Psoas muscle (tissue), 8 donors: ENCODE measurements at regions of chr1 and their contacts with region 1.

Region 1: DNA sequence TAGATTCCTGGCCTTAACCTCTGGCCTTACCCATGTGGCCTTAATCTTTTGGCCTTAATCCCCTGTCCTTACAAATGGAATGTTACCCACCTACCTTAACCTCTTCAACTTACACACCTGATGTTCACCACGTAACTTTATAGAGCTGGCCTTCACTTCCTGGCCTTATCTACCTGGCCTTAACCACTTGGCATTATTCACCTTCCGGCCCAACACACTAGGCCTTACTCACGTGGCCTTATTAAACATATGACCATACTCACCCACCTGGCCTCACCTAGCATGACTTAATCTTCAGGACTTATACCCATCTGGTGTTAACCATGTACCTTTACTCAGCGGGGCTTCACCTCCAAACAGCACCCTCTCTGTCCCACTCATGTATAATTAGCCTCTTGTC is 41.7 kb downstream of the EXOC8 start:
- DNase-seq: no peak
- ATAC-seq: peak in 2 of 4 donors; percentile 15 to 19
- H3K4me3 ChIP-seq: no peak overlapping the region
- H3K27ac ChIP-seq: no peak overlapping the region
- H3K4me1 ChIP-seq: no peaks in the 10 kb centered on the region
- H3K27me3 ChIP-seq: no peaks in the 10 kb centered on the region
- CTCF ChIP-seq: no peak

Region 2: DNA sequence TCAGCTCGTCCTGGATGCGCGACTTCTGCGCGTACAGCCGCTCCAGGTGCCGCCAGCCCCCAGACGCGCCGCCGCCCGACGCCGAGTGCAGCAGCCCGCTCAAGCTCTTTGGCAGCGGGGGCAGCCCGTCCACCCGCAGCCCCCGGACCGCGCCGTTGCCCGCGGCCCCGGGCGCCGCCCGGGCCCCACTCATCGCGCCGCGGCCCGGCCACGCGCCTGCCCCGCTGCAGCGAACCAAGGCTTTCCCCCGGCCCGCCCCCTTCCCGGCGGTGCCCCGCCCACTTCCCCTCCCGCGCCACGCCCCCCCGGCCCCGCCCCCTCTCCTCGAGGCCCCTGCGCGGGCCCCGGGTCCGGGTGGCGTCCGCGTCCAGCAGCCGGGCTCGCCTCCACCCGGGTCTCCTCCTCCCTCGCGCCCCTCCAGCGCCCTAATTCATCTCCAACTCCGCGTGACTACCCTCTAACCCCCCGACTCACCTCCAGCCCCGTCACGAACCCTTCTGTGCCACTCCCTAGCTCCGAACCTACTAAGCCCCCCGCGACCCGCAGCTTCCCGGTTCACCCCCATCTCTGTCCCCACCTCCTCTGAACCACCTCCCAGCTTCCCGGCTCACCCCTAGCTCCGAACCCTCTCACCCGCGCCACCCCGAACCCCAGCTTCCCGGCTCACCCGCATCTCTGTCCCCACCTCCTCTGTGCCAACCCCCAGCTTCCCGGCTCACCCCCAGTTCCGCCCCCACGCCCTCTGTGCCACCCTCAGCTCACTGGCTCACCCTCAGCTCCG is 255.7 kb before region 1 on chr1 and contains the start of gene FAM89A:
- intact Hi-C with region 1: no loop called
- DNase-seq: peak; percentile 75 to 76
- ATAC-seq: peak; percentile 46 to 82 (median 72)
- H3K4me3 ChIP-seq: peak within 1 kb of the TSS; percentile 77
- H3K27ac ChIP-seq: peak within 1 kb of the TSS; percentile 46
- H3K4me1 ChIP-seq: no peaks in the 10 kb centered on the region
- H3K27me3 ChIP-seq: peaks cover 0 to 57% (median 21%) of the 10 kb centered on the region in 3 donors
- CTCF ChIP-seq: no peak
- total RNA-seq, gene FAM89A: 2.7 to 6.3 (median 4.6) TPM

Region 3: DNA sequence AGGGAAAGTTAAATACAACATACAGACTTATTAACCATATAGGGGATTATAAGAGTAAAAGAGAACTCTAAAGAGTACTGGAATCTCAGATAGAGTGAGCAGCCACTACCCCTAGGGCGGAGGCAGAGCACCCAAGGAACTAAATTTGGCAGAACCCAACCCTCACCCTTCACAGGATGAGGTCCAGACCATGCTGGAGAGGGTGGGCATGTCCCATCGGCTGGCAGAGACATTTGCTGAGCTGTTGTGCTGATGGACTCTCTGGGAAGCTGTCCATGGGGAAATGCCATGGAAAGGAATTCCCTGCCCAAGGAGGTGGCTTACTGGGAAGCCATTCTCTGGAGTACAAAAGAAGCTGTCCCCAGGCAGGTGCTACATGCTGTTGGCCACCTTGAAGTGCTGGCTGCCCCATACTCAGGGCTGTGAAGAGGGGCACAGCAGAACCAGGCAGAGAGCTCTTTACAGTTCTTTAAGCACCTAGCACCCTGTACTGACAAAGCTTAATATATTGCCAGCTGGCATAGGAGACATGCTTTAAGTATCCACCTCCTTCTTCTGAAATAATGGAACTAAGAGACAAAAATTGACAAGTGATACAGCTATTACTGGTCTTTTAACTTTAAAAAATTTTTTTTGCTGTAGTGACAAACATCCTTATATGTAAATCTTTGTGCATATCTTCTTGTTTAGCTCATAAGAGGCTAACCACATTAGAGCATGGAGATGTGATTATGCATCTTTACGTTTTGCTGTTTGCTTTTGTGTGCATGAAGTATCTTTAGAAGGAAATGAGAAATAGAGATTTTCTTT is 262.2 kb after region 1 on chr1:
- intact Hi-C with region 1: loop called in 1 of 2 experiments (anchors 1 kb)
- DNase-seq: no peak
- ATAC-seq: peak in 3 of 4 donors; percentile 40 to 67 (median 48)
- H3K4me3 ChIP-seq: no peak overlapping the region
- H3K27ac ChIP-seq: no peak overlapping the region
- H3K4me1 ChIP-seq: peaks cover 15% of the 10 kb centered on the region
- H3K27me3 ChIP-seq: no peaks in the 10 kb centered on the region
- CTCF ChIP-seq: no peak